Dendritic cell treated with granulocyte-macrophage colony-stimulating factor and Interleukin-4, amounts not matched to agents 40 ng/mL and 50 ng/mL, for 4 days (primary cell): ENCODE measurements at regions of chr7 and their contacts with region 1.

Region 1: DNA sequence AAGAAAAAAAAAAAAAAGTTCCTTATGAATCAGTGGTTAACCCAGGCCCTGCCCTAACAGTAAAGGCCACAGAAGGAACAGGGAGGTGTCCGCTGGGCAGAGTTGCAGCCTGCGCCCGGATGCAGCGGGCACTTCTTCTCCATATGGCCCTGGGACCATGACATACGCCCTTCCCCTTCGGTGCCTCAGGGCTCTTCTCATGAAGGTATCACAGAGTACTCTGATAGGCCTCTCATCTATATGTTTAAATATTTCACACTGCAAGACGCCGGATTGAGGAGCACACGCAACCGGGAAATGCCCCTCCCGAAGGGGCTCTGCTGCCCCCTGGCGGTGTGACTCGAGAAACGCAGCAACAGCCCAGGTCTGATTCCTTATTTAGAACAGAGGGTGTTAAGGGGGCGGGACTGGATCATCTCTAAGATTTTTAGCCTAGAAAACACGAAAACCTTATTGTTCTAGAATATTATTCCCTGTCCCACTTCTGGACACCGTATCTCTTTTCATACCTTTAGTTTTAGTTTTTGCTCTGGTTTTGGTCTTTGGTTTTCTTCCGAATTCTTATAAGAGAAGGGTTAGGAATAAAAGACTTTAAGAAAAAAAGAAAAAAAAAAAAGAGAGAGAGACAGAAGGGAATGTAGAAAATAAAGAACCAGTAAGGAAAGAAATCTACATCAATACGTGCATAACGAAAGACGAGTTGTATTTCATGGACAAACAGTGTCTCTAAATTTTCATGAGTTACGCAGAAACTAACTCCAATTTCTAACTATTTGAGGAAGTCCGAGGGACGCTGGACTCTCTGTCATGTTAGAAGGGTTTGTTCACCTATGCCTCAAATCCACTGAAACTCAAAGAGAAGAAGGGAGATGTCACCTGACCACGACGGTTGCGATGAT is 12.0 kb downstream of the DAGLB start:
- H3K4me3 Mint-ChIP-seq: peak overlapping the region; percentile 76
- H3K27ac Mint-ChIP-seq: peak overlapping the region; percentile 95
- H3K4me1 Mint-ChIP-seq: peaks cover 76% of the 10 kb centered on the region
- H3K27me3 Mint-ChIP-seq: no peaks in the 10 kb centered on the region

Region 2: DNA sequence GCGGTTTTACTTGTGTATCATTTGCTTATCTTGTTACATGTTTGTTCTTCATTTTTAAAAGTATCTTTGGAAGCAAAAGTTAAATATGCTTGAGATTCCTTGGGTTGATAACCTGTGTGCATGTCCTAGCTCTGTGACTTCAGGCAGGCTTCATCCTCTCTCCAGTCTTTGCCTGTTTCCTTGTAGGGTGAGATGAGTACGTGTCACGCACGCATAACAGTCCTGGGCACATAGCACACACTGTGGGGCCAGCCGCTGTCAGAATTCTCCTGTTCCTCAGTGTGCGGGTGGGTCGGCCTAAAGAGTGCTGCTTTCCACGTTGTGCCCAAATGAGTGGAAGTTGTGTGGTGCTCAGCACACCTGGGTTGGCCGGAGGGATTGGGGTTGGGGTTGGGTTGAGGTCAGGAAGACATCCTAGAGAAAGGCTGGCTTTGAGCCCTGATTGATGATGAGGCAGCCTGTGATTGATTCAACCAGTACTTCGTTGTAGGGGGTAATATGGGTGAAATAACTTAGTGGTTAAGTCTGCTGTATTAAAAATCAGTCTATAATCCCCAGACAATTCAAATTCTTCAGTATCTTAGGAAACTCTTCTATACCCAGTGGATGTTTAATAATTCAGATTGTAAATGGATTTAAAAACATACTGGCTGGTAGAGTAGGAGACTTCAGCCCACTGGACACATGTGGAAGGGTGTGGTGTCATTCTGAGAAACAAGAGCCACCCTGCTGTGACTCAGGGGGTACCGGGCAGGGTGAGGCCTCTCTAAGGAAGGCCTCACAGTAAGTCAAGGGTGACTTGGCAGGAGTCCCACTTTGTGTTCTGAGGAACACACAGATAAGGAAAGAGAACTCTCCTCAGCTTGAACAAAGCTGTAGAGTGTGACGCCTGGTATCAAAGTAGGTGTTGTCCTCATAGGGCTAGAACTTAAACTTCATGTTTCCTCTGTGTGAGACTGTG is 42.7 kb before region 1 on chr7:
- intact Hi-C with region 1: loop called (anchors 5 kb)
- H3K4me3 Mint-ChIP-seq: peak overlapping the region; percentile 53
- H3K27ac Mint-ChIP-seq: peak overlapping the region; percentile 85
- H3K4me1 Mint-ChIP-seq: peaks cover 71% of the 10 kb centered on the region
- H3K27me3 Mint-ChIP-seq: no peaks in the 10 kb centered on the region

Region 3: DNA sequence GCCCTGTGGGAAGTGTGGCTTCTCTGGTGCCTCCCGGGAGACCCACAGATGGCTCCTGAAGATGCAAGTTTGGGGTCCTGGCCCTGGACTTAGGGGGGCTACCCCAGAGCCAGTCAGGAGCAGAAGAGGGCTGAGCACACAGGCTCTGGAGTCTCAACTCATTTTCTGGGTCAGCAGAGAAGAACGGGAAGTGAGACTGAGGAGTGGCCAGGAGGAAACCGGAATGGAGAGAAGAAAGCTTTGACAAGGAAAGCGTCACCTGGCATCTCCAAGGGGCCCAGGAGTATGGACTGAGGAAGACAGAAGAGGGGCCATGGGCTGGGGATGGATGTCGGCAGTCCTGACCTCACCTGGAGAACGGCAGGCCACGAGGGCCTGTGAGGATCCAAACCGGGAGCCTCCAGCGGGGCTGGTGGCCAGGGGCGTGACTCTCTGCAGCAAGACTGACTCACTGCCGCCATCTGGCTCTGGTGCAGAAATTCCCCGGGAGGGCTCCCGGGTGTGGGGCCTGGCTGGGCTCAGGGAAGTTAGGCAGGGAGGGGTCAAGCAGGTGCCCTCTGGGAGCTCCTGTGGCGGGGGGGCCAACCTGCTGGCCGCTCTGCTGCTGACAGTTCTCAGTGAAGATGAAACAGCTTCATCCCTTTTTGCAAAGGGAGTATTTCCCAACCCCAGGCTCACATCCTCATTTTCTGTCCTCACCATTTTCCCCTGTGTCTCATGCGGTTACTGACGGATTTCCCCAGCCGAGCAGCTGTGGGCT is 11.6 kb before region 1 on chr7:
- intact Hi-C with region 1: loop called (anchors 1 kb)
- H3K4me3 Mint-ChIP-seq: peak overlapping the region; percentile 60
- H3K27ac Mint-ChIP-seq: peak overlapping the region; percentile 96
- H3K4me1 Mint-ChIP-seq: peaks cover 61% of the 10 kb centered on the region
- H3K27me3 Mint-ChIP-seq: no peaks in the 10 kb centered on the region

Region 4: GRCh38 chr7:6460303-6460702 is 24.6 kb after region 1 on chr7:
- intact Hi-C with region 1: no loop called
- H3K4me3 Mint-ChIP-seq: no peak overlapping the region
- H3K27ac Mint-ChIP-seq: no peak overlapping the region
- H3K4me1 Mint-ChIP-seq: no peaks in the 10 kb centered on the region
- H3K27me3 Mint-ChIP-seq: no peaks in the 10 kb centered on the region

Region 5: GRCh38 chr7:6482743-6483119 is 47.0 kb after region 1 on chr7:
- intact Hi-C with region 1: no loop called
- H3K4me3 Mint-ChIP-seq: peak overlapping the region; percentile 95
- H3K27ac Mint-ChIP-seq: peak overlapping the region; percentile 93
- H3K4me1 Mint-ChIP-seq: peaks cover 25% of the 10 kb centered on the region
- H3K27me3 Mint-ChIP-seq: no peaks in the 10 kb centered on the region

Region 6: GRCh38 chr7:6691609-6692106 is 255.9 kb after region 1 on chr7:
- intact Hi-C with region 1: no loop called
- H3K4me3 Mint-ChIP-seq: no peak overlapping the region
- H3K27ac Mint-ChIP-seq: no peak overlapping the region
- H3K4me1 Mint-ChIP-seq: no peaks in the 10 kb centered on the region
- H3K27me3 Mint-ChIP-seq: no peaks in the 10 kb centered on the region